Activated CD8-positive, alpha-beta T cell treated with anti-CD3 and anti-CD28 coated beads, Interleukin-2, amount 10 ng/mL, durations not matched to agents 7 days and 5 days (primary cell): ENCODE measurements at regions of chr17 and their contacts with region 1.

Region 1: DNA sequence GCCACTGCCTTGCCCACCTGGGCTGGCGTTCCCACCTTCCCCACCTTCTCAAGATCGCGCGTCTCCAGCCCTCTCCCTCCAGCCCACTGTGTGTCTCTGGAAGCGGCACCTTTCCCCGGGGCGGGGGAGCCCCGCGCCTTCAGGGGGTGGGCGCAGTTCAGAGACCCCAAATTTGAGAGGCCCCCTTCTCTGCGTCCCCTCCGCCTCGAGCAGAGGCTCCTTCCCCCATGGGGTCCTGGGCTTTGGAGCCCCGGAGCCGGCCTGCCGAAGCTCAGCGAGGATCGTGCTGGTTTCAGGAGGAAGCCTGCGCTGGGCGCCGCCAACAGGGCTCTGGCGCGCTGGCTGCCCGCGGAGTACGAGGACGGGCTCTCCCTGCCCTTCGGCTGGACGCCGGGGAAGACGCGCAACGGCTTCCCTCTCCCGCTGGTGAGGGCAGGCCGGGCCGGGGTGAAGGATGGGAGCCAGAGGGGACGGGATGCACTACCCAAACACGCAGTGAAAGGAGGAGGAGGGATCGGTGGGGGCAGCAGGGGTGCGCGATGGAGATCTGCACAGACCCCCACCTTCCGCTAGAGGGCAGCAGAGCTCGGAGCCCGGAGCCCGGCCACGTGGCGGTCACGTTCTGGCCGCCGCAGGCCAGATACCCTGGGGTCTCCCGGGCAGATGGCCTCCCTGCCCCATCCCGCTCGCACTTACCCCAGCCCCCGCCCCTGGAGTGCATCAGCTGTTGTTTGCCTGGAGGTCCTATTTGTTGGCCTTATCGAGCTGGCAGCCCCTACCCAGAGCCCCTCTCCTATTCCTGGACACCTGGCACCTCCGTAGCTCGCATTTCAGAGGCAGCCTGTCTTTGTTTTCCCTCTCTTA is 11.1 kb downstream of the LPO start:
- DNase-seq: peak; percentile 79
- ATAC-seq: peak; percentile 89
- H3K4me3 Mint-ChIP-seq: peak overlapping the region; percentile 77
- H3K27ac Mint-ChIP-seq: peak overlapping the region; percentile 41
- H3K4me1 Mint-ChIP-seq: peaks cover 32% of the 10 kb centered on the region
- H3K27me3 Mint-ChIP-seq: peaks cover 28% of the 10 kb centered on the region

Region 2: DNA sequence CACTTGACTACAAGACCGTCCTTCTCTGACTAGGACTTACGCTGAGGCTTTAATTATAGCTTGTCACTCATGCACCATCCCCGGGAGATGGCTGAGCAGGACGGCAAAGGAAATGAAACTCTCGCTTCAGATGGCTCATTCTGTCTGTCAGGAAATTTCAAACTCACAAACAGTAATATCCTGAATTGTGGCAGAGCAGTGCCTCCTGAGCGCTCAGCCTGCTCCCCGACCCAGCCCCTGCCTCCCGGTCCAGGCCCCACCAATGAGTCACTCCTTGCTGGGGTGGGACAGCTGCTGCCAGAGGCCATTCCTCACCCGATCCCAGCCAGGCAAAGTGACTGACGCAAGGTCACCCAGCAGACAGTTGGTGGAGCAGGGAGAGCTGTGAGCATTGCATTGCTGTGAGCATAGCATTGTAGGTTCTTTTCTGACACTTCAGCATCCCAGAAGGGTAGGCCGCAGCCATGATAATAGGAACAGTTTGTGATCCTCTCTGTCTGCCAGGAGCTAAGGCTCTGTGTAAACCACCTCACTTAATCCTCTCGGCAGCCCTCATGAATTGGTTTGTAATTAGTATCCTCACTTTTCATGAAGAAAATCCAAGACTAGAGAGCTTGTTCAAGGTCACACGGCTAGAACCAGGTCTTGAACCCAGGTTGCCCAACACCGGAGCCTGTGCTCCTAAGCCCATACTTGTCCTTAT is 525.3 kb before region 1 on chr17:
- CTCF ChIA-PET with region 1: no interaction called
- POLR2A ChIA-PET with region 1: no interaction called
- DNase-seq: no peak
- ATAC-seq: no peak
- H3K4me3 Mint-ChIP-seq: no peak overlapping the region
- H3K27ac Mint-ChIP-seq: no peak overlapping the region
- H3K4me1 Mint-ChIP-seq: peaks cover 6% of the 10 kb centered on the region
- H3K27me3 Mint-ChIP-seq: no peaks in the 10 kb centered on the region

Region 3: DNA sequence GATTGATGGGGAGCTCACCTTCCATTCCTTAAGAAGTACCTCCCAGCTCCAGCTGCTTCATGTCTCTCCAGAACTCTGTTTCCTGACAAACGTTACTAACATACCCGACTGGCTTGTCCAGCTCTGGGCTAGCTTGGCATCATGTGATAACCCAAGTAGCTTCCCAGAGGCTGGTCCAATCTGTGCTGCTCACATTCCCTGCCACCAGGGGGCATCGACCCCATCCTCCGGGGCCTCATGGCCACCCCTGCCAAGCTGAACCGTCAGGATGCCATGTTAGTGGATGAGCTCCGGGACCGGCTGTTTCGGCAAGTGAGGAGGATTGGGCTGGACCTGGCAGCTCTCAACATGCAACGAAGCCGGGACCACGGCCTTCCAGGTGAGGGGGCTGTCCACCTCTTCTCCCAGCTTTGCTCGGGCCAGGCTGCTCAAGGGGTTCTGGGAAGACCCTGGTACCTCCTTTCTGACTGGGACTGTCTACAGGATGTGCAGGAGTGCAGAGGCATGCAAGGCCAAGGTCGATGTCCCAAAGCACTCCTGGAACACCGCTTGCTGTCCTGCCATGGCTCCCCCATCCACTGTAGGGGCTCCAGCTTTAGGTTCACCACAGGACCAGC is 49.4 kb before region 1 on chr17:
- CTCF ChIA-PET with region 1: interaction called, 13 read pairs
- POLR2A ChIA-PET with region 1: no interaction called
- DNase-seq: peak; percentile 68
- ATAC-seq: peak; percentile 92
- H3K4me3 Mint-ChIP-seq: no peak overlapping the region
- H3K27ac Mint-ChIP-seq: no peak overlapping the region
- H3K4me1 Mint-ChIP-seq: no peaks in the 10 kb centered on the region
- H3K27me3 Mint-ChIP-seq: peaks cover 4% of the 10 kb centered on the region

Region 4: DNA sequence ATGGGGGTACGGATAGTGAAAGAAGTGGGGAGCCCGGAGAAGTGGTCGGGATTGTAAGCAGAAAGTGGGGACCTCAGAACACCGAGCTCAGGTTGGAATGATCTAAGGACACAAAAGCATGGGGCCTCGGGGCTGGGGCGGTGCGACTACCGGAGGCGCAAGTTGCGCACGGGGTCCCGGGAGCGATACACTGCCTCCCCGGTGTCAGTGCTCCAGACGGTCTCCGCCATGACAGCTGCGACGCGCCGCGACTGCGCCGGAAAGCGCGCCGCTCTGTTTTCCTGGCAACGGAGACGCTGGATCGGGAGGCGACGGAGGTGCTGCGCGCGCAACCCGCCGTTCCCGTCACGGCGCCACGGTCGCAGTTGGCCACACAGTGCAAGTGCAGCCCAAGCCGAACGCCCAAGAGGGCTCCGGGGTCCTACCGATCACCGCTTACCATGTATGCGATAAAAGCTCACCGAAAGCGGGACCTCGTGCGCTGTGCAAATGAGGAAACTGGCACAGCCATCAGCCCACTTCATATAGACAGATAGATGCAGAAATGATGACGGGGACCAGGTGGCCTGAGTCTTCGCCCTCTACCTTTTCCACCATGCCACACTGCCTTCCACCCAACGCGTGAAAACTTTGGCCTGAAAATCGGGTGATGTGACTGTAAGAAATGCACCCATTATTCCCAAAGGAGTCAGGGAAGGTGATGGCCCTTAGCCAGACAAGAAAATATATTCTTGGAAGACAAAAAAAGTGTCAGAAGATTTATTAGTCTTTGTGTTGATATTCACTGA is 30.3 kb before region 1 on chr17 and contains the start of gene MKS1:
- CTCF ChIA-PET with region 1: interaction called, 24 read pairs
- POLR2A ChIA-PET with region 1: interaction called, 3 read pairs
- DNase-seq: peak; percentile 97
- ATAC-seq: peak; percentile 98
- H3K4me3 Mint-ChIP-seq: peak within 1 kb of the TSS; percentile 87
- H3K27ac Mint-ChIP-seq: peak within 1 kb of the TSS; percentile 97
- H3K4me1 Mint-ChIP-seq: peaks cover 24% of the 10 kb centered on the region
- H3K27me3 Mint-ChIP-seq: peaks cover 11% of the 10 kb centered on the region
- total RNA-seq, gene MKS1: 16.1 to 17.6 TPM

Region 5: GRCh38 chr17:58224315-58224714 is 25.2 kb before region 1 on chr17:
- CTCF ChIA-PET with region 1: interaction called, 24 read pairs
- POLR2A ChIA-PET with region 1: interaction called, 3 read pairs
- DNase-seq: no peak
- ATAC-seq: no peak
- H3K4me3 Mint-ChIP-seq: no peak overlapping the region
- H3K27ac Mint-ChIP-seq: no peak overlapping the region
- H3K4me1 Mint-ChIP-seq: peaks cover 14% of the 10 kb centered on the region
- H3K27me3 Mint-ChIP-seq: peaks cover 28% of the 10 kb centered on the region

Region 6: GRCh38 chr17:58232707-58233156 is 16.8 kb before region 1 on chr17:
- CTCF ChIA-PET with region 1: interaction called, 24 read pairs
- POLR2A ChIA-PET with region 1: no interaction called
- DNase-seq: no peak
- ATAC-seq: no peak
- H3K4me3 Mint-ChIP-seq: no peak overlapping the region
- H3K27ac Mint-ChIP-seq: no peak overlapping the region
- H3K4me1 Mint-ChIP-seq: peaks cover 11% of the 10 kb centered on the region
- H3K27me3 Mint-ChIP-seq: peaks cover 38% of the 10 kb centered on the region

Region 7: GRCh38 chr17:58238139-58238634 is 11.3 kb before region 1 on chr17 and contains the start of gene LPO:
- CTCF ChIA-PET with region 1: interaction called, 20 read pairs
- POLR2A ChIA-PET with region 1: no interaction called
- DNase-seq: no peak
- ATAC-seq: no peak
- H3K4me3 Mint-ChIP-seq: no peak within 1 kb of the TSS
- H3K27ac Mint-ChIP-seq: no peak within 1 kb of the TSS
- H3K4me1 Mint-ChIP-seq: no peaks in the 10 kb centered on the region
- H3K27me3 Mint-ChIP-seq: peaks cover 59% of the 10 kb centered on the region
- total RNA-seq, gene LPO: not detected

Region 8: GRCh38 chr17:58344047-58344790 is 94.7 kb after region 1 on chr17:
- CTCF ChIA-PET with region 1: interaction called, 6 read pairs
- POLR2A ChIA-PET with region 1: interaction called, 10 read pairs
- DNase-seq: peak; percentile 91
- ATAC-seq: peak; percentile 76
- H3K4me3 Mint-ChIP-seq: peak overlapping the region; percentile 99
- H3K27ac Mint-ChIP-seq: peak overlapping the region; percentile 92
- H3K4me1 Mint-ChIP-seq: peaks cover 82% of the 10 kb centered on the region
- H3K27me3 Mint-ChIP-seq: no peaks in the 10 kb centered on the region